CD4-positive, alpha-beta memory T cell (primary cell): ENCODE measurements at regions of chr17 and their contacts with region 1.

Region 1: GRCh38 chr17:8057691-8058114 is 18.8 kb downstream of the ALOX15B start:
- DNase-seq: peak; percentile 63 to 74 (median 69)
- H3K4me3 ChIP-seq: no peak overlapping the region
- H3K4me3 Mint-ChIP-seq: no peak overlapping the region
- H3K27ac ChIP-seq: no peak overlapping the region
- H3K27ac Mint-ChIP-seq: no peak overlapping the region
- H3K4me1 ChIP-seq: peaks cover 7% of the 10 kb centered on the region
- H3K4me1 Mint-ChIP-seq: peaks cover 1 to 16% (median 3%) of the 10 kb centered on the region in 4 donors
- H3K27me3 ChIP-seq: peaks cover 27% of the 10 kb centered on the region
- H3K27me3 Mint-ChIP-seq: peaks cover 31 to 32% of the 10 kb centered on the region in 2 donors

Region 2: DNA sequence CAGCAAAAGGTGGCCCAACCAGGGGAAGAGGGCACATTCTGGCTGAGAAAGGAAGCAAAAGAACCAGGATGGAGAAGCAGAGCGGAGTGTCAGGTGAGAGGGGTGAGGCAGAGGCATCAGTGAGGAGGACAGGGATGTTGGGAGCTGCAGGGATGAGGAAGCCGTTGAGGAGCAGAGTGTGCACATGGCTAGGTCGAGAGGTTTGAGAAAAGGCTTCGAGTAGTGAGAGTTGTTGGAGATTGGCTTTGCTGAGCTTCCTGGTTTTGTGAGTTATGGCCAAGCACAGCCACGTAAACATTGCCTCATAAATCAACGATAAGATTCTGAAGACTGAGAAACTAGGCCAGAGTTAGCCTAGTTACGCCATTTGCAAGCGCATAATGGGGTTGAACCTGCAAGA is 313.3 kb before region 1 on chr17:
- CTCF ChIA-PET with region 1: interaction called, 11 read pairs
- POLR2A ChIA-PET with region 1: no interaction called
- intact Hi-C with region 1: no loop called
- DNase-seq: no peak
- H3K4me3 ChIP-seq: no peak overlapping the region
- H3K4me3 Mint-ChIP-seq: no peak overlapping the region
- H3K27ac ChIP-seq: no peak overlapping the region
- H3K27ac Mint-ChIP-seq: no peak overlapping the region
- H3K4me1 ChIP-seq: no peaks in the 10 kb centered on the region
- H3K4me1 Mint-ChIP-seq: peaks cover 0 to 4% (median 2%) of the 10 kb centered on the region in 4 donors
- H3K27me3 ChIP-seq: no peaks in the 10 kb centered on the region
- H3K27me3 Mint-ChIP-seq: peaks cover 14 to 18% of the 10 kb centered on the region in 2 donors

Region 3: DNA sequence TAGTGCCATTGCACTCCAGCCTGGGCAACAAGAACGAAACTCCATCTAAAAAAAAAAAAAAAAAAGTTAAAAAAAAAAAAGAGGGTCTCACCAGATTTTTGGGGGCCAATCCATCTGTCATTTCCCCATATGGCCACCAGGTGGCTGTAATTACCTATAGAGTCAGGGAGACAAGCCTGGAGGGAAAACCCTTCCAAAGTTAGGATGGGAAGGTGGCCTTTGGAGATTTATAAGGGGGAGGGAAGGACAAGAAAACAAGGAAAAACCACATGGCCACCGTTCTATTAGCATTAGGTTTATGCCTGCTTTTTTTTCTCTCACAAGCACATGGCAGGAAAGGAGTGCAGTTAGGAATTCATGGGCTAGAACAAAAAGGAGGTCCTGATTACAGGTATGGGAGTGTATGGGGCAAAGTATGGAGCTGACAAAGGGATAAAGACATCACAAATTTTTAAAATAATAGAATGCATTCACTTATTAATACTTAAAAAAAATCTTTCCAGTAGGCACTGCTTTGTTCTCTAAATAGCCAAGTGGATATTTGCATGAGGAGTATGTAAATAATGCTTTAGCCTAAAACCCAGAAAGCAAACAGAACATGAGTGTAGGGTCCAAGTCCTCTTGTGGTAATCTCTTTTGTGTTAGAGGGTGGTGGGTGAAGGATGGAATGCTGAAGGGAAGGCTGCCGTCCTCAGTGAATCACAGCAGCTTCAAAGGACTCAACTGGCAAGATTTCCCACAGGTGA is 194.8 kb before region 1 on chr17:
- CTCF ChIA-PET with region 1: interaction called, 7 read pairs
- POLR2A ChIA-PET with region 1: interaction called, 6 read pairs
- intact Hi-C with region 1: loop called (anchors 1 kb)
- DNase-seq: peak; percentile 35 to 58 (median 41)
- H3K4me3 ChIP-seq: no peak overlapping the region
- H3K4me3 Mint-ChIP-seq: no peak overlapping the region
- H3K27ac ChIP-seq: no peak overlapping the region
- H3K27ac Mint-ChIP-seq: peak overlapping the region in 5 of 7 donors; percentile 11 to 80 (median 15)
- H3K4me1 ChIP-seq: peaks cover 27% of the 10 kb centered on the region
- H3K4me1 Mint-ChIP-seq: peaks cover 18 to 31% (median 22%) of the 10 kb centered on the region in 4 donors
- H3K27me3 ChIP-seq: no peaks in the 10 kb centered on the region
- H3K27me3 Mint-ChIP-seq: no peaks in the 10 kb centered on the region

Region 4: DNA sequence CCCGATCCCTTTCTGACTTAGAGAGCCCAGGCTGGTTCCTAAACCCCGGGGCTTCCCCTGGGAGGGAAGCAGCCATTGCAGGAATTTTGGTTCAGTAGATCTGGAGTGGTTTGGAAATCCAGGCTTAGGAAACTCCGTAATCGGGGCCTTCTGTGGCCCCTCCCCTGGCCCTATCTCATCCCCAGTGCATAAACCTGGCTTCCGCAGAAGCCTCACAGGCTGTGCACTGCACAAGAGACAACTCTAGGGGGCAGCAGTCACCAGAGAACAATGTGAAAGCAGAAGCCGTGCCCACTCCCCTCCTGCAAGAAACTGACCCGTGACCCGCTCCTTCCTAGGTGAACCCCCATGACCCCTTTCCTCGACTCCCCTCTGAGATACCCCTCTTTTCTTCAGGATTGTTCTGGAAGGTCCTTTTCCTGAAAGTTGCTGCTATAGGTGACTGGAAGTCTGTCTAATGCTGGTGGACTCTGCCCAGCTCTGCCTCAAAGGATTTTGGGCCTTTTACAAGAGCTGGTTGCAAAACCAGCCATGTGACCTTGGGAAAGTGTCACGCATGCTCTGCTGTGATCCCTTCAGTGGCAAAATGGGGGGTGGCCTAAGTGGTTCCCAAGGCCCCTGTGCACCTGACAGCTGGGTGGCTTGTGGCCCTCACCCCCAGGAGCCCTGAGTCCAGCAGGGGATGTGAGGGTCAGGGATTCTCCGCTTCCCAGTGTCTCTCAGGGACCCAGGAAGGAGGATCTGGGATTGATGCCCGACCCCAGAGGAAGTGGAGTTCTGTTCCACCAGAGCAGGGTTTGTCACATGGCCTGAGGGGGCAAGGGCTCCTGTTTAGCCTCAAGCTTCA is 40.8 kb before region 1 on chr17:
- CTCF ChIA-PET with region 1: interaction called, 4 read pairs
- POLR2A ChIA-PET with region 1: no interaction called
- intact Hi-C with region 1: loop called (anchors 5 kb)
- DNase-seq: peak; percentile 24 to 57 (median 33)
- H3K4me3 ChIP-seq: peak overlapping the region in 1 of 2 donors; percentile 47
- H3K4me3 Mint-ChIP-seq: peak overlapping the region; percentile 77 to 89 (median 79)
- H3K27ac ChIP-seq: no peak overlapping the region
- H3K27ac Mint-ChIP-seq: peak overlapping the region in 2 of 7 donors; percentile 32 to 60
- H3K4me1 ChIP-seq: peaks cover 12% of the 10 kb centered on the region
- H3K4me1 Mint-ChIP-seq: peaks cover 0 to 7% (median 4%) of the 10 kb centered on the region in 4 donors
- H3K27me3 ChIP-seq: peaks cover 5% of the 10 kb centered on the region
- H3K27me3 Mint-ChIP-seq: peaks cover 9 to 22% of the 10 kb centered on the region in 2 donors

Region 5: DNA sequence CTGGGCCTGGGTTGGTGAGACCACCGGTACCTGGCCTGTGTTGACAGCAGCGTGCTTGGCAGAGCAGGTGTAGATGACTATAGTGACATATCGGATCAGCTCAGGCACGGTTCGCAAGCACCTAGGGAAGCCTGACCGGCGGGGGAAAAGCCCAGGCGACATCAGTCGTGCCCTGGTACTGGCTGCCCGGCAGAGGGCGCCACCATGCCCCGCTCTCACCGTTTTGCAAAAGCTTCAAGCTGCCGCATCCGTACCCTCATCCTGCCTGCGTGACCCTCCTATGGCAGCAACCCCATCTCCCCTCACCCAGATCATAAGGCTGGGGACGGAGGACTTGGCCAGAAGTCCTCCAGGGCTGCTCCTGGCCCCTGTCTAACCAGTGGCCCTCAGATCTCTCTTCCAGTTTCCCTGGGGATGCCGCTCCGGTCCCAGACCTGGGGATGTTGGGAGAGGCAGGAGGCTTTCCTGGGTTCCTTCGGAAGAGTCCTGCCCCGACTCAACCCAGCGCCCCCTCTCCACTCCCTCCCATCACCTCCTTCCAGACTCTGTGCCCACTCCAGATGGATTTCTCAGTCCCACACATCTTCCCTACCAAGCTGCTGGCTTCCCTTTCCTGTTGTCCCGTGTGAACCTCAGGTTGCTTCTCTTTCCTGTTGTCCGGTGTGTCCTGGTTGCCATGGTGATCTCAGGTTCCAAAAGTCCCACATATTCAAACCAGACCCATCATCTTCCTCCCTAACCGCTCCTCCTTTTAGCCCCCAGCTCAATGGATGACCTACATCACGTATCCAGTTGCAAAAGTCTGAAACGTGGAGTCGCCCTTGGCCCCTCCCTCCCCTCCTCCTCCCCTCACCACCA is 16.2 kb after region 1 on chr17:
- CTCF ChIA-PET with region 1: interaction called, 147 read pairs
- POLR2A ChIA-PET with region 1: interaction called, 5 read pairs
- intact Hi-C with region 1: loop called (anchors 1 kb)
- DNase-seq: peak; percentile 77 to 88 (median 82)
- H3K4me3 ChIP-seq: peak overlapping the region in 1 of 2 donors; percentile 33
- H3K4me3 Mint-ChIP-seq: peak overlapping the region; percentile 74 to 97 (median 86)
- H3K27ac ChIP-seq: no peak overlapping the region
- H3K27ac Mint-ChIP-seq: peak overlapping the region in 6 of 7 donors; percentile 37 to 92 (median 82)
- H3K4me1 ChIP-seq: peaks cover 27% of the 10 kb centered on the region
- H3K4me1 Mint-ChIP-seq: peaks cover 15 to 29% (median 23%) of the 10 kb centered on the region in 4 donors
- H3K27me3 ChIP-seq: peaks cover 24% of the 10 kb centered on the region
- H3K27me3 Mint-ChIP-seq: peaks cover 12 to 18% of the 10 kb centered on the region in 2 donors

Region 6: GRCh38 chr17:8091033-8091687 is 33.5 kb after region 1 on chr17:
- CTCF ChIA-PET with region 1: interaction called, 24 read pairs
- POLR2A ChIA-PET with region 1: no interaction called
- intact Hi-C with region 1: no loop called
- DNase-seq: no peak
- H3K4me3 ChIP-seq: no peak overlapping the region
- H3K4me3 Mint-ChIP-seq: peak overlapping the region in 1 of 8 donors; percentile 26
- H3K27ac ChIP-seq: no peak overlapping the region
- H3K27ac Mint-ChIP-seq: no peak overlapping the region
- H3K4me1 ChIP-seq: peaks cover 12% of the 10 kb centered on the region
- H3K4me1 Mint-ChIP-seq: peaks cover 5 to 16% (median 12%) of the 10 kb centered on the region in 4 donors
- H3K27me3 ChIP-seq: no peaks in the 10 kb centered on the region
- H3K27me3 Mint-ChIP-seq: peaks cover 17 to 21% of the 10 kb centered on the region in 2 donors

Region 7: GRCh38 chr17:8300627-8301242 is 243.0 kb after region 1 on chr17:
- CTCF ChIA-PET with region 1: interaction called, 14 read pairs
- POLR2A ChIA-PET with region 1: interaction called, 4 read pairs
- intact Hi-C with region 1: loop called (anchors 2 kb)
- DNase-seq: peak; percentile 62 to 76 (median 72)
- H3K4me3 ChIP-seq: no peak overlapping the region
- H3K4me3 Mint-ChIP-seq: peak overlapping the region in 2 of 8 donors; percentile 2
- H3K27ac ChIP-seq: no peak overlapping the region
- H3K27ac Mint-ChIP-seq: peak overlapping the region in 6 of 7 donors; percentile 47 to 90 (median 83)
- H3K4me1 ChIP-seq: peaks cover 7% of the 10 kb centered on the region
- H3K4me1 Mint-ChIP-seq: peaks cover 7 to 16% (median 11%) of the 10 kb centered on the region in 4 donors
- H3K27me3 ChIP-seq: no peaks in the 10 kb centered on the region
- H3K27me3 Mint-ChIP-seq: peaks cover 0 to 1% of the 10 kb centered on the region in 2 donors

Region 8: DNA sequence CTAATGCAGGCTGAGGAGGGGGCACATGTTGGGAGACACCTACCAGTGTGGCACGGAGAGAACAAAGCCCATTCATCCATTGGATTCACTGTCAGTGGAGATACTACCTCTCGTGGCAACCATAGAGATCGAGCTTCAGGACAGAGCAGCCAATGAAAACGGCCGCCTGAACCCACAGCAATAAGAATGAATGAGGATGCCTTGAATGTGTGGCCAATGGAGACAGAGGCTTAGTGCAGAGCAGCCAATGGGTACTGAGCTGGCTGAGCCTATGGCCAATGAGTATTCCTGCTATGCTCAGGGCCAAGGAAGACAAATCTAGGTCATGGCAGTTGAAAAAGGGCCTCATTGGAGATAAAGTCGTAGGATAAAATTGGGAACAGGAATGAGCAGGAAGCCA is 263.3 kb after region 1 on chr17:
- CTCF ChIA-PET with region 1: no interaction called
- POLR2A ChIA-PET with region 1: no interaction called
- intact Hi-C with region 1: no loop called
- DNase-seq: no peak
- H3K4me3 ChIP-seq: no peak overlapping the region
- H3K4me3 Mint-ChIP-seq: no peak overlapping the region
- H3K27ac ChIP-seq: no peak overlapping the region
- H3K27ac Mint-ChIP-seq: no peak overlapping the region
- H3K4me1 ChIP-seq: peaks cover under 1% of the 10 kb centered on the region
- H3K4me1 Mint-ChIP-seq: peaks cover 2 to 4% (median 3%) of the 10 kb centered on the region in 4 donors
- H3K27me3 ChIP-seq: peaks cover 4% of the 10 kb centered on the region
- H3K27me3 Mint-ChIP-seq: peaks cover 13 to 20% of the 10 kb centered on the region in 2 donors